Activated CD4-positive, alpha-beta T cell treated with anti-CD3 and anti-CD28 coated beads for 36 hours (primary cell): ENCODE measurements at regions of chr20 and their contacts with region 1.

Region 1: GRCh38 chr20:2873010-2873746 is at the start of gene PTPRA:
- DNase-seq: peak; percentile 96
- ATAC-seq: peak; percentile 91
- H3K4me3 Mint-ChIP-seq: peak within 1 kb of the TSS; percentile 84
- H3K27ac Mint-ChIP-seq: peak within 1 kb of the TSS; percentile 95
- H3K4me1 Mint-ChIP-seq: peaks cover 44% of the 10 kb centered on the region
- H3K27me3 Mint-ChIP-seq: no peaks in the 10 kb centered on the region
- total RNA-seq, gene PTPRA: 58.5 to 86.3 TPM

Region 2: DNA sequence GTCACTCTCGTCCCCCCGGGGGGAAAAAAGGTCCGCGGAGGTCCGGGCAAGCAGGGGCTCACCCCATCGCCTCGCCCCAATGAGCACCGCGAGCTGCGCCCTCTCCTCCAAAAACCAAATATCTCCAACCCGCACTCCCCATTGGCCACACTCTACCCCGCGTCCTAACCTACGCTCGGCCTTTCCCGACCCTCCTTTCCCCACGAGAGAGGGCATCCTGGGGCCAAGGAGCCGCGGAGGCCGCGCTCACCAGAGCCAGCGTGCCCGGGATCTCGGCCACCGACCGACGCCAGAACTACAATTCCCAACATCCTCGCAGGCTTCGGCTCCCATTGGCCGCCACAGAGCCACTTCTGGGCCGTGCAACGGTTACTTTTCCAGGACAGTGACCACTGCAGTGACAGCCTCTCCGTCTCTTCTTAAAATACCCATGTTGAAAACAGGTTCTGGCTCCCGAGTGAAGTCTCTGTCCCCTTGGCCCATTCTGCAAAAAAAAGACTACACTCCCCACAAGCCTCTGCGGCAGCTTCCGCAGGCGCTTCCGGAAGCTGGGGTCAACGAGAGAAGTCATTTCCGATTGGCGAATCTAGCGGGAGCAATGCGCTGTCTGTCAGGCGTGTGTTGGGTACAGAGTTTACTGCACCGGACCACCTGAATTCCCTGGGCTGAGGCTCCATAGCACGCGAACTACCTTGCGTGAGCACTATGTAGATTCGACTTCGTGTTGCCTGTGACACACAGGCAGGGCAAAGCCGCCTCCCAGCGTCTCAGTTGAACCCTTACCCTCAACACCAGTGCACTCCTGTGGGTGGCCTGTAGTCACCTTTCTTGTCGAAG is 364.3 kb before region 1 on chr20 and contains the start of gene ZNF343:
- CTCF ChIA-PET with region 1: no interaction called
- POLR2A ChIA-PET with region 1: no interaction called
- intact Hi-C with region 1: loop called in 1 of 2 experiments (anchors 1 kb)
- DNase-seq: peak; percentile 88
- ATAC-seq: peak; percentile 95
- H3K4me3 Mint-ChIP-seq: peak within 1 kb of the TSS; percentile 85
- H3K27ac Mint-ChIP-seq: peak within 1 kb of the TSS; percentile 95
- H3K4me1 Mint-ChIP-seq: peaks cover 8% of the 10 kb centered on the region
- H3K27me3 Mint-ChIP-seq: peaks cover 5% of the 10 kb centered on the region
- total RNA-seq, gene ZNF343: 9.9 to 12.3 TPM

Region 3: GRCh38 chr20:2767768-2768631 is 105.2 kb before region 1 on chr20:
- CTCF ChIA-PET with region 1: no interaction called
- POLR2A ChIA-PET with region 1: no interaction called
- intact Hi-C with region 1: no loop called
- DNase-seq: no peak
- ATAC-seq: no peak
- H3K4me3 Mint-ChIP-seq: no peak overlapping the region
- H3K27ac Mint-ChIP-seq: no peak overlapping the region
- H3K4me1 Mint-ChIP-seq: peaks cover 7% of the 10 kb centered on the region
- H3K27me3 Mint-ChIP-seq: peaks cover 11% of the 10 kb centered on the region

Region 4: GRCh38 chr20:2840138-2840966 is 32.8 kb before region 1 on chr20 and contains the starts of genes PCED1A and VPS16:
- CTCF ChIA-PET with region 1: no interaction called
- POLR2A ChIA-PET with region 1: no interaction called
- intact Hi-C with region 1: loop called (anchors 1 to 2 kb)
- DNase-seq: peak; percentile 94
- ATAC-seq: peak; percentile 99
- H3K4me3 Mint-ChIP-seq: peak within 1 kb of the TSS; percentile 76
- H3K27ac Mint-ChIP-seq: peak within 1 kb of the TSS; percentile 84
- H3K4me1 Mint-ChIP-seq: peaks cover 32% of the 10 kb centered on the region
- H3K27me3 Mint-ChIP-seq: no peaks in the 10 kb centered on the region
- total RNA-seq, gene PCED1A: 29.4 to 35.3 TPM
- total RNA-seq, gene VPS16: 32.3 to 47.6 TPM

Region 5: GRCh38 chr20:2942439-2942838 is 69.3 kb after region 1 on chr20:
- CTCF ChIA-PET with region 1: no interaction called
- POLR2A ChIA-PET with region 1: no interaction called
- intact Hi-C with region 1: no loop called
- DNase-seq: no peak
- ATAC-seq: no peak
- H3K4me3 Mint-ChIP-seq: no peak overlapping the region
- H3K27ac Mint-ChIP-seq: no peak overlapping the region
- H3K4me1 Mint-ChIP-seq: peaks cover 25% of the 10 kb centered on the region
- H3K27me3 Mint-ChIP-seq: no peaks in the 10 kb centered on the region

Region 6: DNA sequence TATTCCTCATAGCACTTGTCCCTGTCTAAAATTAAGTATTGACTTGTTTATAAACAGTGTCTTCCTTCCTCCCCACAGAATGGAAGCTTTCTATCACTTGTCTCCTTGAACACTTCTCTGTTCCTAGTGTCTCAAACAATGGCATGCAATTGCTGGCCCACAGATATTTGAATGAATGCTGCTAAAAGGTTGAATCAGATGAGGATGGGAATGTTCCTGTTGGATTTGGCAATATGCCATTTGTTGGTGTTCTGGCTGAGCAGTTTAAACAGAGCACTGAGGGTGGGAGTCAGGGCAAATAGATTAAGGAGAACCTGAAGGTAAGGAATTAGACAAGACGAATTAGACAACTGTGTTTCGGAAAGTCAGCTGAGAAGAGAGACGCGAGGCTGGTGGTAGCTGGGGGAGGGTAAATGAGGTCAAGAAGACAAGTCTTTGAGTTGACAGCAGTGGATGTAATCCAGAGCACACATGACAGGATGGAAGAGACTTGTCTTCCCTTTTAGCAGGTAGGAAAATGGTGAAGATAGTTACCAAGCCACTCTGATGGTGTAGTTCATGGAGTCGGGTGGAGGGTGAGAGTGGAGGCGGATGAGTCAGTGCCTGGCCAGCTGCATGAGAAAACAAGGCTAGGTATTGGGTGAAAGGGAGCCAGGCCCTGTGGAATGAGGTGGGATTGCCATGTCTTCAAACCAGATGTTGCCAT is 111.9 kb after region 1 on chr20:
- CTCF ChIA-PET with region 1: interaction called, 3 read pairs
- POLR2A ChIA-PET with region 1: no interaction called
- intact Hi-C with region 1: loop called (anchors 1 to 2 kb)
- DNase-seq: peak; percentile 71
- ATAC-seq: no peak
- H3K4me3 Mint-ChIP-seq: no peak overlapping the region
- H3K27ac Mint-ChIP-seq: no peak overlapping the region
- H3K4me1 Mint-ChIP-seq: peaks cover 25% of the 10 kb centered on the region
- H3K27me3 Mint-ChIP-seq: no peaks in the 10 kb centered on the region

Region 7: DNA sequence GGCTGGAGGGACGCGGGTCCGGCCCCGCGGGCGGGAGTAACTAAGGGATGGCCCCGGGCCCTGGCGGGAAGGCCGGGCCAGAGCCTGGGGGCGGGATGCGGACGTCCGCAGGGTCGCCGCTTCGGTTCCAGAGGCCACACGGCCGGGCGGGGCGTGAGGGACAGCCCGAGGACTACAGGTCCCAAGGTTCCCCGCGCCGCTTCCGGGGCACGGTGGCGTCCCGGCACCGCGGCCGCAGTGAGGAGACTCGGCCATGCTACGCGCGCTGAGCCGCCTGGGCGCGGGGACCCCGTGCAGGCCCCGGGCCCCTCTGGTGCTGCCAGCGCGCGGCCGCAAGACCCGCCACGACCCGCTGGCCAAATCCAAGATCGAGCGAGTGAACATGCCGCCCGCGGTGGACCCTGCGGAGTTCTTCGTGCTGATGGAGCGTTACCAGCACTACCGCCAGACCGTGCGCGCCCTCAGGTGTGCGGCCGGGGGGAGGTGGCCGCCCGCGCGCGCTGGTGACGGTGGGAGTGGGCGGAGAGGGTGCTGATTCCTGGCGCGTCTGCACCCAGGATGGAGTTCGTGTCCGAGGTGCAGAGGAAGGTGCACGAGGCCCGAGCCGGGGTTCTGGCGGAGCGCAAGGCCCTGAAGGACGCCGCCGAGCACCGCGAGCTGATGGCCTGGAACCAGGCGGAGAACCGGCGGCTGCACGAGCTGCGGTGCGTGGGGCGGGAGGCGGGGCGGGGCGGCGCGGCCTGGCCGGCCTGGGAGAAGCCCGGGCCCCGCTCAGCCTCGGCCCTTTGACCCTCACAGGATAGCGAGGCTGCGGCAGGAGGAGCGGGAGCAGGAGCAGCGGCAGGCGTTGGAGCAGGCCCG is 172.9 kb after region 1 on chr20 and contains the start of gene MRPS26:
- CTCF ChIA-PET with region 1: no interaction called
- POLR2A ChIA-PET with region 1: no interaction called
- intact Hi-C with region 1: loop called in 1 of 2 experiments (anchors 2 kb)
- DNase-seq: peak; percentile 92
- ATAC-seq: peak; percentile 94
- H3K4me3 Mint-ChIP-seq: peak within 1 kb of the TSS; percentile 89
- H3K27ac Mint-ChIP-seq: peak within 1 kb of the TSS; percentile 88
- H3K4me1 Mint-ChIP-seq: peaks cover 27% of the 10 kb centered on the region
- H3K27me3 Mint-ChIP-seq: no peaks in the 10 kb centered on the region
- total RNA-seq, gene MRPS26: 107 to 153 TPM

Region 8: DNA sequence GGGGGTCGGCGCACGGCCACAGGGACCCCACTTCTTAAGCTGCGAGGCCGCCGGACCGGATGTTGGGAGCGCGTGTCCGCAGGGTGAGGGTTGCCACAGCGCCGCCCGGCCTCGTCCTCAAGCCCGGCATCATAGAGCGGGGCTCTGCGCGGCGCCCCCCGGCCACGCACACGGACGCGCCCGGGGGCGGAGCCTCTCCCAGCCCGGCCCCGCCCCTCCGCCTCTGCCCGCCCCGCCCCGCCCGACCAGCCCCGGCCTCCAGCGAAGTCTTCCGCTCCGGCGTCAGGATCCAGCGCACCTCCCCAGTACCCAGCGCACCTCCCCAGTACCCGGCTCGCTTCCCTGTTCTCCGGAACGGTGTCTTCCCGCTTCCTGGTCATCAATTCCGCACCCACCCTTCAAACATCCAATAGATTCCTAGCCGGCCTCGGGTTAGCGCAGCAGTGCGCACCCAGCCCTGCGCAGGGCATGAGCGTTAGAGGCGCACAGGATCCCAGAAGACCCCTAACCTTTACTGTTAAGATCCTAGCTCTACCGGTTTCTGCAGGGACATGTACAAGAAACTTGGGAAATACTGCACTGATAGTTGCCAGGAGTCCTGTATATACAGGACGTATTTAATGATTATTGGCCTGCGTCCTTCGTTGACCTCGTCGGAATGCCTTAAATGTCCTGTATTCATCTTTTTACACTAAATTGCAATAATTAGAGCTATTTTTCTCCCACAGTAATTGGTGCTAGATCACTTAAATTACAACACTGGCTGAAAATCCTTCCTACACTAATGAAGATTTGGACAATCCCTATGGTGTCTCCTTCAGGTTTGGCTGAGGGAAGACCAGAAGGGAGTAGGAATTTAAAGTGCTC is 534.8 kb after region 1 on chr20:
- CTCF ChIA-PET with region 1: no interaction called
- POLR2A ChIA-PET with region 1: no interaction called
- intact Hi-C with region 1: loop called in 1 of 2 experiments (anchors 1 kb)
- DNase-seq: peak; percentile 80
- ATAC-seq: peak; percentile 64
- H3K4me3 Mint-ChIP-seq: peak overlapping the region; percentile 83
- H3K27ac Mint-ChIP-seq: peak overlapping the region; percentile 88
- H3K4me1 Mint-ChIP-seq: peaks cover 32% of the 10 kb centered on the region
- H3K27me3 Mint-ChIP-seq: peaks cover 3% of the 10 kb centered on the region